ENCODE measurements at regions of chr1 and their contacts with region 1.

Region 1: DNA sequence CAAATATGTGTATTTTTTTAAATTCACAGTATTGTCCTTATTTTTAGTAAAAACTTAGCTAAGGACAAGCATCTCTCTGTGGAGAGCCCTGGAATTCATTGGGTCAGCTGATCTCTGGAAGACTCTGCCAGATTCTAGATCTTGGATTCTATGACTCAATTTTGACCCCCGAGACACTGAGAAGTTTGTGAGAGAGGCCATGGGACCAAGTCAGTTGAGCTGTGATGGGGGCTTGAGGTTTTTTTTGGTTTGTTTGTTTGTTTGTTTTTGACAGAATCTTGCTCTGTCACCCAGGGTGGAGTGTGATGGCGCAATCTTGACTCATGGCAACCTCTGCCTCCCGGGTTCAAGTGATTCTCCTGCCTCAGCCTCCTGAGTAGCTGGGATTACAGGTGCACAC is 13.5 kb downstream of the SHISA4 start:
- DNase-seq: peak in 1 of 2 experiments; percentile 33
- H3K4me3 ChIP-seq: no peak overlapping the region
- H3K27ac ChIP-seq: no peak overlapping the region
- H3K4me1 ChIP-seq: peaks cover 17% of the 10 kb centered on the region
- H3K27me3 ChIP-seq: no peaks in the 10 kb centered on the region
- CTCF ChIP-seq: no peak

Region 2: GRCh38 chr1:201937624-201938213 is 35.5 kb after region 1 on chr1:
- CTCF ChIA-PET with region 1: interaction called, 10 read pairs
- POLR2A ChIA-PET with region 1: no interaction called
- intact Hi-C with region 1: no loop called
- DNase-seq: peak in 1 of 2 experiments; percentile 52
- H3K4me3 ChIP-seq: no peak overlapping the region
- H3K27ac ChIP-seq: peak overlapping the region; percentile 62
- H3K4me1 ChIP-seq: peaks cover 27% of the 10 kb centered on the region
- H3K27me3 ChIP-seq: no peaks in the 10 kb centered on the region
- CTCF ChIP-seq: no peak